B cell (primary cell): ENCODE measurements at regions of chr5 and their contacts with region 1.

Region 1: GRCh38 chr5:113612060-113612496 is 98.6 kb downstream of the YTHDC2 start:
- DNase-seq: peak; percentile 51
- ATAC-seq: peak; percentile 43
- H3K4me3 ChIP-seq: no peak overlapping the region
- H3K4me3 Mint-ChIP-seq: no peak overlapping the region
- H3K27ac ChIP-seq: no peak overlapping the region
- H3K27ac Mint-ChIP-seq: no peak overlapping the region
- H3K4me1 ChIP-seq: peaks cover 0 to 3% of the 10 kb centered on the region in 2 donors
- H3K4me1 Mint-ChIP-seq: peaks cover 1% of the 10 kb centered on the region
- H3K27me3 ChIP-seq: peaks cover 0 to 6% (median 2%) of the 10 kb centered on the region in 4 experiments
- H3K27me3 Mint-ChIP-seq: peaks cover 28% of the 10 kb centered on the region
- CTCF ChIP-seq: peak; percentile 78

Region 2: DNA sequence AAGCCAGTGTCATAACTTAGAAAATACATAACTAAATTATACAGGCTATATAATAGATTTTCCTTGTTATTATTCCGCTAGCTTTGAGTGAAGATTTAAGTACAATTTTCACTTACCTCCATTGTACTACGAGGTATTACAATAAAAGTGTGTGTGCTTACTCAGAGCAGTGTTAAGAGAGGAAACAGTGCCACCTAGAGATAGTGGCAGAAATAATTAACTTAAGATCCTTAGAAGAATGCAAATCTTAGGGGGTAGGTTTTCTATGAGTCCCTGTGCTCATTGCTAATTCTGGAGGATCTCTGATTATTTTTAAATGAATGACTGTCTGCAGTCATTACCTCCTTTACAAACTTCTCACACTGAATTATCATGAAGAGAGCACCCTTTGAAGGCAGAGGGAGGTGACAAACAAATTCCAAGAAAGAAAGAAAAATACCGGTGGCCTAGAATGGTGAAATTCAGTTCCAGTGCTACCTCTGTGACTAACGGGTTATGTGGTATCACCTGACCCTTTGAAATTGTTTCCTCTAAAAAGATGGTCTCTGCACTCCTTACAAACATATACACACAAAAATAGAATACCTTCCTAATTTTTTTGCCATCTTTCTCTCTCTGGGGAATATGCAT is 1177.8 kb after region 1 on chr5:
- CTCF ChIA-PET with region 1: no interaction called
- POLR2A ChIA-PET with region 1: no interaction called
- intact Hi-C with region 1: loop called (anchors 5 kb)
- DNase-seq: no peak
- ATAC-seq: no peak
- H3K4me3 ChIP-seq: no peak overlapping the region
- H3K4me3 Mint-ChIP-seq: no peak overlapping the region
- H3K27ac ChIP-seq: no peak overlapping the region
- H3K27ac Mint-ChIP-seq: no peak overlapping the region
- H3K4me1 ChIP-seq: no peaks in the 10 kb centered on the region
- H3K4me1 Mint-ChIP-seq: no peaks in the 10 kb centered on the region
- H3K27me3 ChIP-seq: no peaks in the 10 kb centered on the region
- H3K27me3 Mint-ChIP-seq: no peaks in the 10 kb centered on the region
- CTCF ChIP-seq: no peak

Region 3: DNA sequence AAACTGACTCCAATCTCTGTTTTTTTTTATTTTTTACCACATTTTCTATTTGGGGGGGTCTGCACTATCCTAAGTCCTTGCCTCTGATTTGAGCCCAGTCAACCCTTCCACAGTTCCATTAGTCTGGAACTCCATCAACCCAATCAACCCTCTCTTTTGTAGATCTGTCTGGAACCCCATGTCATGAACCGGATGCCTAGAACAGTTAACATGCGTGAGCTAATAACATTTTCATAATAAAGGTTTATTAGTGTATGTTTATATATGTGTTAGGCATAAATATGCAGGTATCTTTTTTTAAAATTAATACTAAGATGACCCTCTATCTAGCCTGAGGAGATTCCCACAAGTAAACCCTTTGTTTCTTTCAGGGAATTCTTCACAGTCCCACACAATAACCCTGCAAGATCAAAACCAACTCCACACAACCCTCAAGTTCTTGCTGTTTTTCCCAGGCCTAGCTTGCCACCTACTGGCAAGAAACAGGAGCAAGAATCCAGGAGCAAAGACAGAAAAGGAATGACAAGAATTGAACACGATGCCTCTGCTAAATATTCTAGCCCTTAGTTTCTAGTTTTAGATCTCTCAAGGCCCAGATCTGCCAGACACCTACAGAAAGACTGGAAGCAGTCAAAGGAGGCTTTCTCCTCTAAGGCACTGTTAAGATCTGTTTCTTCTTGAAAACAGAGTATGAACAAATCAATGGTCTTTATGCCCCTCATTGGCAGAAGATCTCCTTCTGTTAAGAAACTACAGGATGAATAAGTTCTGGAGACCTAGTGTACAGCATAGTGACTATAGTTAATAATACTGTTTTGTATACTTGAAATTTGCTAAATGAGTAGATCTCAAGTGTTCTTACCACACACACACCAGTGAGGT is 1457.2 kb after region 1 on chr5:
- CTCF ChIA-PET with region 1: interaction called, 10 read pairs
- POLR2A ChIA-PET with region 1: no interaction called
- intact Hi-C with region 1: loop called (anchors 2 kb)
- DNase-seq: peak; percentile 25
- ATAC-seq: no peak
- H3K4me3 ChIP-seq: no peak overlapping the region
- H3K4me3 Mint-ChIP-seq: peak overlapping the region; percentile 29
- H3K27ac ChIP-seq: no peak overlapping the region
- H3K27ac Mint-ChIP-seq: no peak overlapping the region
- H3K4me1 ChIP-seq: peaks cover 6 to 18% of the 10 kb centered on the region in 2 donors
- H3K4me1 Mint-ChIP-seq: peaks cover 39% of the 10 kb centered on the region
- H3K27me3 ChIP-seq: peaks cover 0 to 5% (median 0%) of the 10 kb centered on the region in 4 experiments
- H3K27me3 Mint-ChIP-seq: peaks cover 3% of the 10 kb centered on the region
- CTCF ChIP-seq: peak; percentile 32